CD4-positive, alpha-beta memory T cell (primary cell): ENCODE measurements at regions of chr6 and their contacts with region 1.

Region 1: DNA sequence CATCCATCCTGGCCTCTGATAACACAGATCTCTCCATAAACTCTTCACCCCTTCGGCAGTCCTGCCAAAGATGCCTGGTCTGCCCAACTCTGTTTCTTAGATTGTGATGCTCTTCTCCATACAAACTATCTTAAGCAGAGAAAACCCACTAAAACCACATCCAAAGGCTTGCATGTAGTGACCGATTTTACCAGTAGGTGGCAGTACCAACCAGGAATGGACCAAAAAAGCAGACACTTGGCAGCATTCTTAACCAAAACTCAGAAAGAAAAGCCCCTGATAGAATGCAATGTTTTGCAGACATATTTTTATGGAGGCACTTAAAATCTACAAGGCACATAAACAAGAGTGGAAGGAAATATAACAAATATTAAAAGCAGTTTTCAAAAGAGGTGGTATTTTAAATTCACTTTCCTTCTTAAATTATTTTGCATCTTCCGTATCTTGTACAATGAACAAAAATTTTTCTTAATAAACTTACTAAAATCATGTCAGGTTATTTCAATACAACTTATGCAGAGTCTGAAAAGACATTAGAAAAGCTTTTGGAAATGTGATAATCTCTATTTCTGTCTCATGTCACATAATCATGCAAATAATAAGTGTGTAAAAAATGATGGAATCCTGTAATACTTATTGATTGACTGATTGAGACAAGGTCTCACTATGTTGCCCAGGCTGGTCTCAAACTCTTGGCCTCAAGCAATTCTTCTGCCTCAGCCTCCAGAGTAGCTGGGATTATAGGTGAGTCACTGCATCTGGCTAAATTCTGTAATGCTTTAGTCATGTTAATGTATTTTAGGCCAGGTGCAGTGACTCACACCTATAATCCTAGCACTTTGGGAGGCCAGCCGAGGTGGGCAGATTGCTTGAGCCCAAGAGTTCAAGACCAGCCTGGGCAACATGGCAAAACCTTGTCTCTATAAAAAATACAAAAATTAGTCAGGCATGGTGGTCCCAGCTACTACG is 29.4 kb downstream of the LRP11 start:
- DNase-seq: peak; percentile 69 to 78 (median 70)
- H3K4me3 ChIP-seq: no peak overlapping the region
- H3K4me3 Mint-ChIP-seq: no peak overlapping the region
- H3K27ac ChIP-seq: no peak overlapping the region
- H3K27ac Mint-ChIP-seq: no peak overlapping the region
- H3K4me1 ChIP-seq: peaks cover 3% of the 10 kb centered on the region
- H3K4me1 Mint-ChIP-seq: peaks cover 0 to 4% (median 2%) of the 10 kb centered on the region in 4 donors
- H3K27me3 ChIP-seq: no peaks in the 10 kb centered on the region
- H3K27me3 Mint-ChIP-seq: peaks cover 0 to 2% of the 10 kb centered on the region in 2 donors

Region 2: DNA sequence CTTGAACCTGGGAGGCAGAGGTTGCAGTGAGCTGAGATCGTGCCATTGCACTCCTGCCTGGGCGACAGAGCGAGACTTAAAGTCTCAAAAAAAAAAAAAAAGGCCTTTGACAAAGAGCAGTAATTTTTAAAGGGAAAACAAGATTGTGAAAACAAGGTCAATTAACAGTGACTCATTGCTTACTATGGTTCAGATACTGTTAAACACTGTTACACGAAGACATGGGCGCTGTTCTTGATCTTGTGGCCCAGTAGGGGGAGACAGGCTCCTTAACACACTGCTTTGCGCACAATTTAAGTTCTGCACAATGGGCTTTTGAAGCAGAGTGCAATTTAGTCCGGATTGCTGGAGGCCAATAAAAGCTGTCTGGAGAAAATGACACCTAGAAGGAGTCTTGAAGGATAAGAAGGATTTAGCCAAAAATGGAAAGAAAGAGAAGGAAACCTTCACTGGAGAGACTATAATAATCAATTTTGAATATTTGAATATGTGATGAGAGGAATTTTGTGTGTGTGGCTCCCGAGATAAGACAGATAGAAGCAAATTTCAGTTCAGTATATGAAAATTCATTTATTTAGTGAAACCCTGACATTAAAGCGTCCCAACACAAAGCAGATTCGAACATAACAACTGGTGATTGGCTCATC is 110.9 kb before region 1 on chr6:
- CTCF ChIA-PET with region 1: interaction called, 5 read pairs
- POLR2A ChIA-PET with region 1: no interaction called
- intact Hi-C with region 1: loop called (anchors 1 kb)
- DNase-seq: peak; percentile 34 to 54 (median 42)
- H3K4me3 ChIP-seq: no peak overlapping the region
- H3K4me3 Mint-ChIP-seq: no peak overlapping the region
- H3K27ac ChIP-seq: no peak overlapping the region
- H3K27ac Mint-ChIP-seq: peak overlapping the region in 3 of 7 donors; percentile 8 to 52 (median 13)
- H3K4me1 ChIP-seq: peaks cover 19% of the 10 kb centered on the region
- H3K4me1 Mint-ChIP-seq: peaks cover 15 to 22% (median 15%) of the 10 kb centered on the region in 4 donors
- H3K27me3 ChIP-seq: no peaks in the 10 kb centered on the region
- H3K27me3 Mint-ChIP-seq: no peaks in the 10 kb centered on the region

Region 3: DNA sequence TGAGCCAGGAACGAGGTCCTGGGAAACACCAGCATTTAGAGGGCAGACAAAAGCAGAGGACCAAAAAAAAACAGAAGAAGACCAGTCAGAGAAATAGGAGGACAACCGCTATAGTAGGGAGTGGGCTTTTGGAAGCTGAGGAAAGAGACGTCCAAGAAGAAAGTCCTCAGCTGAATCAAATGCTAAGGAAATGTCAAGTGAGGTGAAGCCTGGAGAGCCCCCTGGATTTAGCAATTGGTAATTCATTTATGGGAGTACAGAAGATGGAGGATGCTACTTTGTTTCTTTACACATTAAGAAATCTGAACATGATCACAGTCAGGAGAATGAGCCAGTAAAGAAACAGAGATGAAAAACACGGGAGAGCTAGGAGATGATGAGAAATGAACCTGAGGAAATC is 11.8 kb before region 1 on chr6:
- CTCF ChIA-PET with region 1: interaction called, 11 read pairs
- POLR2A ChIA-PET with region 1: no interaction called
- intact Hi-C with region 1: no loop called
- DNase-seq: no peak
- H3K4me3 ChIP-seq: no peak overlapping the region
- H3K4me3 Mint-ChIP-seq: no peak overlapping the region
- H3K27ac ChIP-seq: no peak overlapping the region
- H3K27ac Mint-ChIP-seq: no peak overlapping the region
- H3K4me1 ChIP-seq: no peaks in the 10 kb centered on the region
- H3K4me1 Mint-ChIP-seq: peaks cover 0 to 1% (median 0%) of the 10 kb centered on the region in 4 donors
- H3K27me3 ChIP-seq: no peaks in the 10 kb centered on the region
- H3K27me3 Mint-ChIP-seq: peaks cover 0 to 1% of the 10 kb centered on the region in 2 donors

Region 4: DNA sequence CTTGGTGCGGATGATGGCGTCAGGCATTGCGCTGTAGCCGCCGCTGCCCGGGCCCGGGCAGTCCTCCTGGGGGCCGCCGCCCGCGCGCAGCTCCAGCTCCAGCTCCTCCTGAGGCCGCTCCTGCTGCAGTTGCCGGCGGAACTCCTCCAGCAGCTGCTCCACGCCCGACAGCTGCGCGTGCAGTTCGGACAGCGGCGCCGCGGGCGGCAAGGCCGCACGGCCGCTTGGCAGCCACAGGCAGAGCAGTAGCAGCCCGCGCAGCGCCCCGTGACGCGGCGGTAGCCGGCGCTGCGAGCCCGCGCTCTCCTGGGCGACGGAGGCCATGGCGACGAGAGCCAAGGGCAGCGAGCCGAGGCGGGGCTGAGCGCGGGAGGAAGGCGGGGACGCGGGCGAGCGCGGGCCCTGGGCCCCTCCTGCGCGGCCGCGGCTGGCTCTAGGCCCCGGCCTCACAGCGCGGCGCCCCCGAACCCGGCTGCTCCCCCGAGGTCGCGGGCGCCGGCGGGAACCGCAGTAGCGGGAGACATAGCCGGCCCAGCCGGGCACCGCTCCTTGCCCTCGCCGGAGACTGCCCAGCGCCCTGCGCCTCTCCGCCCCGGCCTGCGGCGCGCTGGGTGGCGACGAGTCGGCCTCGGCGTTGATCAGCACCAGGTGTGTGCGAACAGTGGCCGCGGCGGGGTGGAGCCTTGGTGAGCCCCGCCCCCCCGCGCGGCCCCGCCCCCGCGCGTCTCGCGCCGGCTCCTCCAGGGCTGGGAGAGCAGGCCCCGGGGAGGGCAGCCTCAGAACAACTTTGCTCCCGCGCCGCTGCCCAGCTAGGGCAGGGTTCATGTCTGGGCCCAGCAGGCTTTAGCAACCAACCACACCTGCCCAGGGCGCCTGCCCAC is 29.1 kb after region 1 on chr6 and contains the start of gene LRP11:
- CTCF ChIA-PET with region 1: interaction called, 12 read pairs
- POLR2A ChIA-PET with region 1: no interaction called
- intact Hi-C with region 1: loop called (anchors 1 kb)
- DNase-seq: peak; percentile 80 to 89 (median 85)
- H3K4me3 ChIP-seq: peak within 1 kb of the TSS; percentile 20 to 73
- H3K4me3 Mint-ChIP-seq: peak within 1 kb of the TSS; percentile 77 to 93 (median 84)
- H3K27ac ChIP-seq: peak within 1 kb of the TSS; percentile 29
- H3K27ac Mint-ChIP-seq: peak within 1 kb of the TSS; percentile 29 to 92 (median 79)
- H3K4me1 ChIP-seq: peaks cover 13% of the 10 kb centered on the region
- H3K4me1 Mint-ChIP-seq: peaks cover 3 to 23% (median 10%) of the 10 kb centered on the region in 4 donors
- H3K27me3 ChIP-seq: no peaks in the 10 kb centered on the region
- H3K27me3 Mint-ChIP-seq: peaks cover 0 to 5% of the 10 kb centered on the region in 2 donors
- total RNA-seq, gene LRP11: 3.6 to 5.6 TPM

Region 5: DNA sequence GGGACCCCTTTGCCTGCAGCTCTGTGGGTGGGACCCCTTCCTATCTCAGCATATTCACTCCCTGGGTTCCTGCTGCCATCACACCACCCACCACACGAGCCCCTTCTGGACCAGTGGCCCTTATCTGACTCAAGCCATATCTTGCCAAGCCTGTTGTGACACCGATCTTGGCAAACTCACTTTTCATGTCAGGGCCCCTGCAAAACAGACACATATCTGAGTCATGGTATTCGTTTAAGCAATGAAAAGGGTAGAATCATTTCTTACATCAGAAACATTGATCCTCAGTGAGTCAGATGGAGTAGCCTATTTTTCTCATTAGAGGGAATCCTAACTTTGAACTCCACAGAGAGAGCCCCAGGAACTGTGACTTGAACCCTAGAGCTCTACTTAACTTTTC is 52.5 kb after region 1 on chr6:
- CTCF ChIA-PET with region 1: no interaction called
- POLR2A ChIA-PET with region 1: no interaction called
- intact Hi-C with region 1: no loop called
- DNase-seq: no peak
- H3K4me3 ChIP-seq: no peak overlapping the region
- H3K4me3 Mint-ChIP-seq: no peak overlapping the region
- H3K27ac ChIP-seq: no peak overlapping the region
- H3K27ac Mint-ChIP-seq: no peak overlapping the region
- H3K4me1 ChIP-seq: no peaks in the 10 kb centered on the region
- H3K4me1 Mint-ChIP-seq: no peaks in the 10 kb centered on the region
- H3K27me3 ChIP-seq: no peaks in the 10 kb centered on the region
- H3K27me3 Mint-ChIP-seq: peaks cover 4 to 20% of the 10 kb centered on the region in 2 donors

Region 6: GRCh38 chr6:149925974-149926777 is 91.4 kb after region 1 on chr6:
- CTCF ChIA-PET with region 1: interaction called, 18 read pairs
- POLR2A ChIA-PET with region 1: no interaction called
- intact Hi-C with region 1: loop called (anchors 1 kb)
- DNase-seq: peak; percentile 59 to 70 (median 63)
- H3K4me3 ChIP-seq: no peak overlapping the region
- H3K4me3 Mint-ChIP-seq: peak overlapping the region; percentile 14 to 60 (median 28)
- H3K27ac ChIP-seq: no peak overlapping the region
- H3K27ac Mint-ChIP-seq: peak overlapping the region in 1 of 7 donors; percentile 5
- H3K4me1 ChIP-seq: peaks cover 29% of the 10 kb centered on the region
- H3K4me1 Mint-ChIP-seq: peaks cover 11 to 38% (median 21%) of the 10 kb centered on the region in 4 donors
- H3K27me3 ChIP-seq: peaks cover 47% of the 10 kb centered on the region
- H3K27me3 Mint-ChIP-seq: peaks cover 73 to 82% of the 10 kb centered on the region in 2 donors

Region 7: DNA sequence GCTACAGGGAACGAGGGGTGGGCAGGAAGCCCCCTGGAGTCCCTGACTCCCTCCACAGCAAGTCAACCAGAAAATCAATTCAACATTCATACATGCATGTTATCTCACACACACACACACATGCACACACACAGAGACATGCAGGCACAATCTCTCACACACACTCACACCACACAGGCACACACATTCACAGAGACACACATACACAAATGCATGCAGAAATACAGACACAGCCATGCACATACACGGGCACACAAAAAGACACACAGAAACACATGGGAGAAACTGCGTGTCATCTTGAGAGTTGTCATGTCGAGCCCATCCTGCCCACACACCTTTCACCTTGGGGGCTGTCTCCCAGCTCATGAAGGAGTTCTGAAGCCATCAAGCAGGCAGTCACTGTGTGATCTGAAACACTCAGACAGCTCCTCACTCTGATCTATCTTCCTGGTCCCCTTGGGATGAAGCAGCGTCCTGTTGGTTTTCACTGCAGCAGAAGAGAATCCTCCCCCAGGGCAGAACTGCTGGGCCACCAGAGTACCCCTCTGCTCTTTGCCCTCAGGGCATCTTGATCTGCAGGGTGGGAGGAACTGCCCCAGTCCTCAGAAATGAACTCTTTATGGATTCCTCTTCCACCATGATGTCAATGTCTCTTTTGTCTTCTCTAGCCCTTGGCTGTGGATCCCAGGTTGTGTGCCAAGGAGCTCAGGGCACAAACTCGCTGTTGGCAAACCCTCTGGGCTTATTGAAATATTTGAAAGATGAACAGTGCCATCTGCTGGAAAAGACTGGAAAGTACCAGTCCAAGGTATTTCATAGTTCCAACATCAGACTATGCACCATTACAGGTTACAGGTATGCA is 181.8 kb after region 1 on chr6:
- CTCF ChIA-PET with region 1: interaction called, 12 read pairs
- POLR2A ChIA-PET with region 1: no interaction called
- intact Hi-C with region 1: loop called (anchors 2 kb)
- DNase-seq: peak; percentile 60 to 79 (median 72)
- H3K4me3 ChIP-seq: no peak overlapping the region
- H3K4me3 Mint-ChIP-seq: peak overlapping the region in 2 of 8 donors; percentile 13 to 26
- H3K27ac ChIP-seq: no peak overlapping the region
- H3K27ac Mint-ChIP-seq: peak overlapping the region in 3 of 7 donors; percentile 32 to 50 (median 47)
- H3K4me1 ChIP-seq: peaks cover 8% of the 10 kb centered on the region
- H3K4me1 Mint-ChIP-seq: peaks cover 8 to 28% (median 12%) of the 10 kb centered on the region in 4 donors
- H3K27me3 ChIP-seq: peaks cover 19% of the 10 kb centered on the region
- H3K27me3 Mint-ChIP-seq: peaks cover 52 to 66% of the 10 kb centered on the region in 2 donors

Region 8: GRCh38 chr6:150395398-150396009 is 560.7 kb after region 1 on chr6:
- CTCF ChIA-PET with region 1: no interaction called
- POLR2A ChIA-PET with region 1: no interaction called
- intact Hi-C with region 1: loop called (anchors 2 kb)
- DNase-seq: peak in 4 of 5 donors; percentile 14 to 33 (median 22)
- H3K4me3 ChIP-seq: no peak overlapping the region
- H3K4me3 Mint-ChIP-seq: no peak overlapping the region
- H3K27ac ChIP-seq: no peak overlapping the region
- H3K27ac Mint-ChIP-seq: no peak overlapping the region
- H3K4me1 ChIP-seq: no peaks in the 10 kb centered on the region
- H3K4me1 Mint-ChIP-seq: peaks cover 0 to 1% (median 0%) of the 10 kb centered on the region in 4 donors
- H3K27me3 ChIP-seq: no peaks in the 10 kb centered on the region
- H3K27me3 Mint-ChIP-seq: peaks cover 3 to 11% of the 10 kb centered on the region in 2 donors